Psoas muscle (tissue), 8 donors: ENCODE measurements at regions of chr22 and their contacts with region 1.

Region 1: GRCh38 chr22:46035742-46036557 is 59.0 kb upstream of the WNT7B start:
- DNase-seq: peak; percentile 100
- ATAC-seq: peak; percentile 88 to 96 (median 93)
- H3K4me3 ChIP-seq: peak overlapping the region; percentile 80
- H3K27ac ChIP-seq: peak overlapping the region; percentile 97
- H3K4me1 ChIP-seq: peaks cover 51% of the 10 kb centered on the region
- H3K27me3 ChIP-seq: no peaks in the 10 kb centered on the region
- CTCF ChIP-seq: no peak

Region 2: DNA sequence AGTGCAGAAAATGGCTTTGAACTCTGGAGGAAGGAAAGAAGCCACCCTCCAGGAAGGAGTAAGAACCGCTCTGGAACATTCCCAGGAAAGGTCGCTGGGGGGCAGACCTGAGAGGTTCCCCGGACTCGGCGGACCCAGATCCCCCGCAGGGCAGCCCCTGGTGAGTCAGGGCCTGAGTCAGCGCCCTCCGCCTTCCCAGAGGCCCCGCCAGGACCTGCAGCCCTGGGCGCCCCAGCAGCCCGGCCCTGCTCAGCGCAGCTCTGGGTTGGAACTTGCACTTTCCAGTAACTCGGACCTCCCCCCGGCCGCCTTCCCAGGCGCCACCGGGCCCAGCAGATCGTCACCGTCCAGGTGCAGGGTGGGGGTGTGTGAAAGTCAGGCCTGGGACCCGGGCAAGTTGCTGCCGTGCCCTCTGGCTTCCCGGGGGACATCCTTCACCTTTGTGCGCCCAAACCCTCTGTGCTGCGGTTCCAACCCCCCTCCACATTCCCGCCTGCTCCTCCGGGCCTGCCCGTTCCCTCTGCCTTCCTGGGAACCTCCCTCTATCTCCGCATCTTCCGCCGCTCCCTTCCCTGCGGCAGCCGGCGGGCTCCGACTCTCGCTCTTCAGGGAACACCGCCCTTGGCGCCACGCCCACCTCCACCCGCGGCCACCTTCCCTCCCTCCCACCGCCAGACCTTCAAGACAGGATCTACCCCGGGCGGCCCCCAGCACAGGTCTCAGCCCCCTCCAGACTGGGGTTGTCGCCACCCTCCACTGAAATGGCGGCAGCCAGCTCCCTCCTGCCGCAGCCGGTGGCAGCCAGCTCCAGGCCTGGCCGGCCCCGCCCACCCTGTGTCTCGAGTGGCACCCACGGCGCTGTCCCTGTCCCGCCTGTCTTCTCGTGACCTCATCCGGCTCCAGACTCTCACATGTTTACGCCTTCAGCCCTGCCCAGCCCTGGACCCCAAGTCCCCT is 22.2 kb before region 1 on chr22:
- intact Hi-C with region 1: no loop called
- DNase-seq: peak; percentile 96 to 98
- ATAC-seq: peak; percentile 95 to 97 (median 96)
- H3K4me3 ChIP-seq: peak overlapping the region; percentile 84
- H3K27ac ChIP-seq: peak overlapping the region; percentile 96
- H3K4me1 ChIP-seq: peaks cover 17% of the 10 kb centered on the region
- H3K27me3 ChIP-seq: no peaks in the 10 kb centered on the region
- CTCF ChIP-seq: peak; percentile 72

Region 3: GRCh38 chr22:46053563-46054090 is 17.7 kb after region 1 on chr22:
- intact Hi-C with region 1: loop called in 1 of 2 experiments (anchors 2 kb)
- DNase-seq: peak; percentile 78 to 92
- ATAC-seq: peak; percentile 75 to 82 (median 76)
- H3K4me3 ChIP-seq: peak overlapping the region; percentile 86
- H3K27ac ChIP-seq: peak overlapping the region; percentile 99
- H3K4me1 ChIP-seq: peaks cover 63% of the 10 kb centered on the region
- H3K27me3 ChIP-seq: no peaks in the 10 kb centered on the region
- CTCF ChIP-seq: no peak

Region 4: DNA sequence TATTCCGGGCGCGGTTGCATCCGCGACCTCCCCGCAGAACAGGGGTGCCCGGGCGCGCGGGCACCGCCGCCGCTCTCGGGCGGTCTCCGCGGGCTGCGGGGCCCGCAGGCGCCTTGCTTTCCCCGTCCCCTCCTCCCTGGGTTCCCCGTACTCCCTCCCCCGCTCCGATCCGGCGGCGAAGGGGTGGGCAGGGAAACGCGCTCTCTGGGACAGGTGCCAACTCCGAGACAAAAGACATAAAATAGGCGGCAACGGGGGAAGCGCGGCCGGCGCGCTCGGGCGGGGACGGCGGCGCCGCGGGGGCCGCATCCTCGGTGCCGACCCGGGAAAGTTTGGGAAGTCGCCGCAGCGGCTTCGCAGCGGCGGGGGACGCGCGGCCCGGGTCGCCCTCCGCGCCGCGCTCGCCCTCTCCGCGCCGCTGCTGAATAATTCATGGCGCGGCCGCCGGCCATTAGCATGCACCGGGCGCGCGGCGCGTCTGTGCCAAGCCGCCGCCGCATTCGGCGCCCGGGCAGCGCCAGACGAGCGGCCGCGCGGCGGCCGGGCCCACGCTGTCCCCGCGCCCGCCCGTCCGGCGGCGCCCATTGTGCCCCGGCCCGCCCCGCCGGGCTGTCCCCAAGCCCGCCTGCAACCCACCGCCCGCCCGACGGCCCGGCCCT is 35.6 kb after region 1 on chr22:
- intact Hi-C with region 1: loop called in 1 of 2 experiments (anchors 5 kb)
- DNase-seq: peak; percentile 93 to 97
- ATAC-seq: peak; percentile 30 to 48 (median 36)
- H3K4me3 ChIP-seq: peak overlapping the region; percentile 95
- H3K27ac ChIP-seq: peak overlapping the region; percentile 98
- H3K4me1 ChIP-seq: peaks cover 25% of the 10 kb centered on the region
- H3K27me3 ChIP-seq: no peaks in the 10 kb centered on the region
- CTCF ChIP-seq: no peak